Dendritic cell treated with granulocyte-macrophage colony-stimulating factor and Interleukin-4, amounts not matched to agents 40 ng/mL and 50 ng/mL, for 4 days (primary cell): ENCODE measurements at regions of chr5 and their contacts with region 1.

Region 1: GRCh38 chr5:67149951-67150523 is 46.6 kb downstream of the CD180 start:
- H3K4me3 Mint-ChIP-seq: no peak overlapping the region
- H3K27ac Mint-ChIP-seq: no peak overlapping the region
- H3K4me1 Mint-ChIP-seq: no peaks in the 10 kb centered on the region
- H3K27me3 Mint-ChIP-seq: no peaks in the 10 kb centered on the region

Region 2: GRCh38 chr5:66814146-66814991 is 335.7 kb before region 1 on chr5:
- intact Hi-C with region 1: loop called (anchors 5 kb)
- H3K4me3 Mint-ChIP-seq: no peak overlapping the region
- H3K27ac Mint-ChIP-seq: no peak overlapping the region
- H3K4me1 Mint-ChIP-seq: peaks cover 13% of the 10 kb centered on the region
- H3K27me3 Mint-ChIP-seq: peaks cover 11% of the 10 kb centered on the region

Region 3: DNA sequence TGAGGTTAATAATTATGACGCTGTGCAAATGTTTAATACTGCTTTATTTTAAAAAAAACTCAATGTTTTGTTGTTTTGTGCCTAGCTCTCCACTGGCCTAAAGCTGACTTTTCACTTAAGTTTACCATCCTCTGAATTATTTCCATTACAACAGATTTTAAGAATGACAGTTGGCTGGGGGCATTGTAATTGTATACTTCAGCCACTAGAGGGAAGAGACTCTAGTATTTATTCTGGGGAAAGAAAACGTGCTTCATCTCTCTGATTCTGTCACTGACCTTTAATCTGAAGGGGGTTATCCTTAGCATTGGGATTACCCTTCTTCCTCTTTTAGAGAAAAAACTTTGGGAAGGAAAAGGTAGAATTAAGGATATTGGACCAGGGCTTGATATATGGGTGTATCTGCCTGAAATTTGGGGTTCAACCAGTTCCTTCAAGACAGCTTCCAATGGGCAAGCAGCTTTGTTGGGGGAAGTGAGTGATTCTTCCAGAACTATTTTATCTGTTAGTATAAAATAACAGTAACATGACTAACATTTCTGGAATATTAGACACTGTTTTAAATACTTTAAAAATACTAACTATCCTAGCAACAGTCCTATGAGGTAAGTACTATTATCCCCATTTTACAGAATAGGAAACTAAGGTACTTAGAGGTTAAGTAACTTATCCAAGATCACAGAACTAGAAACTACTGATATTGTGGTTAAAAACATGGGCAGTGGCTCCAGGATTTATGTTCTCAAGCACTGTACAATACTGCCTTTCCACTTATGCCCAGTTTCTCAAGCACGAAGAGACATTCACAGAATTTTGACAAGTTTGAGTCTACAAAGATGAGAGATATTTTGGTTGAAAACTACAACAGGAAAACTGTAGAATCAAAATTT is 161.8 kb before region 1 on chr5:
- intact Hi-C with region 1: loop called (anchors 2 kb)
- H3K4me3 Mint-ChIP-seq: no peak overlapping the region
- H3K27ac Mint-ChIP-seq: no peak overlapping the region
- H3K4me1 Mint-ChIP-seq: peaks cover 8% of the 10 kb centered on the region
- H3K27me3 Mint-ChIP-seq: peaks cover 2% of the 10 kb centered on the region